ENCODE measurements at regions of chr15 and their contacts with region 1.

Region 1: GRCh38 chr15:27714675-27715074 is 384.4 kb downstream of the OCA2 start:
- DNase-seq: no peak
- ATAC-seq: no peak

Region 2: DNA sequence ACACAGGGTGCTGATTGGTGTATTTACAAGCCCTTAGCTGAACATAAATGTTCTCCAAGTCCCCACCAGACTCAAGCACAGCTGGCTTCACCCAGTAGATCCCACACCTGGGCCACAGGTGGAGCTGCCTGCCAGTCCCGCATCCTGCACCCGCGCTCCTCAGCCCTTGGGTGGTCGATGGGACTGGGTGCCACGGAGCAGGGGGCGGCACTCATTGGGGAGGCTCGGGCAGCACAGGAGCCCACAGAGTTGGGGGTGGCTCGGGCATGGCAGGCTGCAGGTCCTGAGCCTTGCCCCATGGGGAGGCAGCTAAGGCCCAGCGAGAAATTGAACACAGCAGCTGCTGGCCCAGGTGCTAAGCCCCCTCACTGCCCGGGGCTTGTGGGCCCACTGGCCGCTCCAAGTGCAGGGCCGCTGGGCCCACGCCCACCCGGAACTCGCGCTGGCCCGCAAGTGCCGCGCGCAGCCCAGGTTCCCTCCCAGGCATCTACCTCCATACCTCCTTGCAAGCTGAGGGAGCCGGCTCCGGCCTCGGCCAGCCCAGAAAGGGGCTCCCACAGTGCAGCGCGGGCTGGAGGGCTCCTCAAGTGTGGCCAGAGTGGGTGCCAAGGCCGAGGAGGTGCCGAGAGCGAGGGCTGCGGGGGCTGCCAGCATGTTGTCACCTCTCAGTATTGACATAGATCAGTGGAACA is 58.2 kb before region 1 on chr15:
- intact Hi-C with region 1: loop called (anchors 10 kb)
- DNase-seq: no peak
- ATAC-seq: no peak